Activated B cell treated with CpG ODN at 0.5 μM for 24 hours (primary cell): ENCODE measurements at regions of chr4 and their contacts with region 1.

Region 1: DNA sequence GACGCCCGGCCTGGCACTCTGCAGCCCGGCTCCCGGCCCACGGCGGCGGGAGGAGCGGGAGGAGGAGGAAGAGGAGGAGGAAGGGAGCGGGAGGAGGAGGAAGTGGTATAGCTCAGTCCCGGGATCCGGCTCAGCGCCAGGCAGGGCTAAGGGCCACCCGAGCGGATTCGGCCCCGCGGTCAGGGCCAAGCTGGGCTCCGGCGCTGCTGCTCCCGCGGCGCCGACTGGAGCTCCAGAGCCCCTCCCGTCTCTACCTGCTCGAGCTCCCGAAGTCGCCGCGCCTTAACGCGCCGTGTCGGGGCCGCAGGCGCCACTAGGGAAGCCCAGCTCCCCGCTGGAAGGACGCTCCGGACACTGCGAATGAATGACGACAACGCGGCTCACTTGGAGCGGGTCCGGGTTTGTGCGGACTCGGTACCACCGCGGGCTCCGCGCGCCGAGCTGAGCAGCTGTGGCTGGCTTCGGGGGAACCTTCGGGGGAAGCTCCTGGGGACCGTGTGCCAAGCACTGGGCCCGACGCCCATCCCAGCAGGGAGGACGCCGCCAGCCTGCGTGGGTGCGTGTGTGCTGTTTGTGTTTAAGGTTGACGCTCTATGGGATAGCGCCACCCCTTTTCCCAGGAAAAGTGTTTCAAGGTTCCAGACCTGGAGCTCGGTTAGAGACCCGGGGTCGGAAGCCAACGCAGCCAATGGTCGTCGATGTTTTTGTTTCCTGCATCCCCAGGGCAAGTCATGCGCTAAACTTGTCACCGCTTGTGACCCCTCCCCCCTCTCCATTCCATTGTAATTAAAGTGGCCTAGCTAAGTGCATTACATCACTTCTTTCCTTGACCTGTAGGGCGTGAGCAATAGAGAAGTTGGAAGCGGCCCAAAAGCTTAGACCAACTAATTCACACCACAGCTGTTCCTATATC is at the start of gene TBC1D9:
- DNase-seq: peak; percentile 70
- ATAC-seq: peak; percentile 48
- H3K4me3 Mint-ChIP-seq: peak within 1 kb of the TSS; percentile 89
- H3K27ac Mint-ChIP-seq: peak within 1 kb of the TSS; percentile 94
- H3K4me1 Mint-ChIP-seq: peaks cover 62% of the 10 kb centered on the region
- H3K27me3 Mint-ChIP-seq: no peaks in the 10 kb centered on the region
- CTCF ChIP-seq: no peak
- total RNA-seq, gene TBC1D9: 37.9 and 46.0 TPM in 2 replicates

Region 2: GRCh38 chr4:139484783-139485318 is 1271.7 kb before region 1 on chr4:
- CTCF ChIA-PET with region 1: no interaction called
- POLR2A ChIA-PET with region 1: no interaction called
- intact Hi-C with region 1: no loop called
- DNase-seq: no peak
- ATAC-seq: no peak
- H3K4me3 Mint-ChIP-seq: no peak overlapping the region
- H3K27ac Mint-ChIP-seq: no peak overlapping the region
- H3K4me1 Mint-ChIP-seq: no peaks in the 10 kb centered on the region
- H3K27me3 Mint-ChIP-seq: no peaks in the 10 kb centered on the region
- CTCF ChIP-seq: no peak

Region 3: DNA sequence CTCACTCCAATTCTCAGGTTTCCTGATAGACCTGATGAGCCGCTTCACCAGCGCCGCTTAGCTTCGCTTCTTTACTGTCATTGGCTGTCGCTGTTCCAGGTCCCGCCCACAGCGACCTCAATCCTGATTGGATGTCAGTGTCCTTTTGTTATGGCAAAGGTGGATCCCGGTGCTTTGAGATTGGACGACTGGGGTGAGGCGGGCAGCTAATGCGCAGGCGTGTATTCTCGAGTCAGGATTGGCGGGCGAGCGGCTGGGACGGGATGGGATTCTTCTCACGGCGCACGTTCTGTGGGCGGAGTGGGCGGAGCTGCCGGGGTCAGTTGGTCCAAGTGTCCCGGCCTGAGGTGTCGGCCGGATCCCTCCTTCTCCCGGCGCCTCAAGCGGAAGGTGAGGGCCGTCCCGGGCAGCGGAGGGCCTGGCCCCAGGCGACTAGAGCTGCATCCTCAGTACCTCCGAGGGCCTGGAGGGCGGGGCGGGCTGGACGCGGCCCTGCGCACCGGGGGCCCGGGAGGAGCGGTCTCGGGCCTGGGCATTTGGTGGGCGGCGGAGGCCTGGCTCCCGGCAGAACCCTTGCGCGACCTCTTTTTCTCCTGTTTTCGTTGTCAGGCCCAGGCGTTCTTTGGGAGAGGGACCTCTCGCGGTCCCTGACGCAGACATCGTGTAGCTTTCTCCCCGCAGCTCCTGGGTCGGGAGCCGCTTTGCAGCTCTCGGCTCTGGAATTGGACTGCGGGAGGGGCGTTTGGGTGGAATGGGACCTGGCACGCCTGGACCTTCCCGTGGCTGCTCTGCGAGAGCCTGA is 383.0 kb before region 1 on chr4 and contains the start of gene SCOC:
- CTCF ChIA-PET with region 1: interaction called, 3 read pairs
- POLR2A ChIA-PET with region 1: interaction called, 7 read pairs
- intact Hi-C with region 1: loop called (anchors 2 kb)
- DNase-seq: peak; percentile 85
- ATAC-seq: peak; percentile 95
- H3K4me3 Mint-ChIP-seq: no peak within 1 kb of the TSS
- H3K27ac Mint-ChIP-seq: peak within 1 kb of the TSS; percentile 74
- H3K4me1 Mint-ChIP-seq: peaks cover 22% of the 10 kb centered on the region
- H3K27me3 Mint-ChIP-seq: no peaks in the 10 kb centered on the region
- CTCF ChIP-seq: no peak
- total RNA-seq, gene SCOC: 18.0 and 19.9 TPM in 2 replicates

Region 4: GRCh38 chr4:140691357-140691756 is 65.2 kb before region 1 on chr4:
- CTCF ChIA-PET with region 1: no interaction called
- POLR2A ChIA-PET with region 1: interaction called, 17 read pairs
- intact Hi-C with region 1: no loop called
- DNase-seq: no peak
- ATAC-seq: no peak
- H3K4me3 Mint-ChIP-seq: no peak overlapping the region
- H3K27ac Mint-ChIP-seq: no peak overlapping the region
- H3K4me1 Mint-ChIP-seq: peaks cover 52% of the 10 kb centered on the region
- H3K27me3 Mint-ChIP-seq: no peaks in the 10 kb centered on the region
- CTCF ChIP-seq: no peak

Region 5: DNA sequence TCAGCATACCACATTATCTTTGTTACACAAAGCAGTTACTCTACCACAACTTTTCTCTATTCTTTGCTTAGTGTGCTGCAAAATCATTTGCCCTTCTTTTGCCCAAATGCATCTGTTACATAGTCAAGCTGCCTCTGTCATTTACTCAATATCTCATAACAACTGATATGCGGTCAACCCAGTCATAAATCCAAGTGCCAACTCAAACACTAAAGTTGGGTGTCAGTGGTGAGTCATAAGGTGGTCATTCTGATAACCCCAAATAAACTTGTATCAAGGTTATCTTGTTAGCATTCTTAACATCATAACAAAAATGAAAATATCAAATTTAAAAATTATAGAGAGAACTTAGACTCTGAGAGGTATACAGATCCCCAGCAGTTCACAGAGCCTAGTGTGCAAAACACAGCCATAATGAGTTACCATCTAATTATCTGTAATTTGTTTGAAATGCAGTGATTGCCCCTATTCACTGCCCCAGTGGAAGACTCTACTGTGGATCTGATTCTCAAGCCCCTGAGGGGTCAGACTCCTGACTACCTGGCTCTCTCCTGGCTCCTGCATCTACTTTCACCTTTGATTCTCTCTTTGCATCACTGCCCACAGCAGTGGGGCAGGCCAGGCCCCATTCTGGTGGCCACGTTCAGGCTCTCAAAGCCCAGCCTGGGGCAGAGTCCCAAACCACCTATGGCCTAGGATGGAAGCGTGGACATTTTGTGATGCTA is 29.6 kb before region 1 on chr4:
- CTCF ChIA-PET with region 1: interaction called, 7 read pairs
- POLR2A ChIA-PET with region 1: interaction called, 64 read pairs
- intact Hi-C with region 1: loop called (anchors 2 kb)
- DNase-seq: no peak
- ATAC-seq: peak; percentile 32
- H3K4me3 Mint-ChIP-seq: no peak overlapping the region
- H3K27ac Mint-ChIP-seq: peak overlapping the region; percentile 81
- H3K4me1 Mint-ChIP-seq: peaks cover 78% of the 10 kb centered on the region
- H3K27me3 Mint-ChIP-seq: no peaks in the 10 kb centered on the region
- CTCF ChIP-seq: no peak

Region 6: DNA sequence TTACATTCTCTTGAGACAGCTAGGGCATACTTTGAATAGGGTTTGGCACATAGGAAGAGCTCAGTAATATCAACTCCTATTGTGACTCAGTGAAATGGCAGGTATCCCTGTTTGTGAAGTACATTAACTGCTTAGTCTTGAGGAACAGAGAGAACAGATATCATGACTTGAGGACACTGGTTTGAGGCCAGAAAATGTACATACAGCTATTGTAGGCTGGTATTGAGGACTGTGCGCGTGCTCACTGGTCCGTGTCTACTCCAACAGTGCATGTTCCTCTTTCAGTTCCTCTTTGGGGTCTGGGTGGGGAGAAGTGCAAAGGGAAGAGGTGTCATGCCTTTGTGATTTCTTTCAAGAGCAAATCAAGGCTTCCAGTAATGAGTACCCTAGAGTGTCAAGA is 34.2 kb after region 1 on chr4:
- CTCF ChIA-PET with region 1: interaction called, 18 read pairs
- POLR2A ChIA-PET with region 1: interaction called, 92 read pairs
- intact Hi-C with region 1: loop called (anchors 1 kb)
- DNase-seq: peak; percentile 67
- ATAC-seq: peak; percentile 93
- H3K4me3 Mint-ChIP-seq: peak overlapping the region; percentile 48
- H3K27ac Mint-ChIP-seq: peak overlapping the region; percentile 71
- H3K4me1 Mint-ChIP-seq: peaks cover 76% of the 10 kb centered on the region
- H3K27me3 Mint-ChIP-seq: no peaks in the 10 kb centered on the region
- CTCF ChIP-seq: no peak

Region 7: GRCh38 chr4:140807491-140808252 is 51.1 kb after region 1 on chr4:
- CTCF ChIA-PET with region 1: interaction called, 4 read pairs
- POLR2A ChIA-PET with region 1: interaction called, 75 read pairs
- intact Hi-C with region 1: loop called (anchors 1 kb)
- DNase-seq: no peak
- ATAC-seq: peak; percentile 78
- H3K4me3 Mint-ChIP-seq: peak overlapping the region; percentile 72
- H3K27ac Mint-ChIP-seq: peak overlapping the region; percentile 93
- H3K4me1 Mint-ChIP-seq: peaks cover 89% of the 10 kb centered on the region
- H3K27me3 Mint-ChIP-seq: no peaks in the 10 kb centered on the region
- CTCF ChIP-seq: no peak

Region 8: DNA sequence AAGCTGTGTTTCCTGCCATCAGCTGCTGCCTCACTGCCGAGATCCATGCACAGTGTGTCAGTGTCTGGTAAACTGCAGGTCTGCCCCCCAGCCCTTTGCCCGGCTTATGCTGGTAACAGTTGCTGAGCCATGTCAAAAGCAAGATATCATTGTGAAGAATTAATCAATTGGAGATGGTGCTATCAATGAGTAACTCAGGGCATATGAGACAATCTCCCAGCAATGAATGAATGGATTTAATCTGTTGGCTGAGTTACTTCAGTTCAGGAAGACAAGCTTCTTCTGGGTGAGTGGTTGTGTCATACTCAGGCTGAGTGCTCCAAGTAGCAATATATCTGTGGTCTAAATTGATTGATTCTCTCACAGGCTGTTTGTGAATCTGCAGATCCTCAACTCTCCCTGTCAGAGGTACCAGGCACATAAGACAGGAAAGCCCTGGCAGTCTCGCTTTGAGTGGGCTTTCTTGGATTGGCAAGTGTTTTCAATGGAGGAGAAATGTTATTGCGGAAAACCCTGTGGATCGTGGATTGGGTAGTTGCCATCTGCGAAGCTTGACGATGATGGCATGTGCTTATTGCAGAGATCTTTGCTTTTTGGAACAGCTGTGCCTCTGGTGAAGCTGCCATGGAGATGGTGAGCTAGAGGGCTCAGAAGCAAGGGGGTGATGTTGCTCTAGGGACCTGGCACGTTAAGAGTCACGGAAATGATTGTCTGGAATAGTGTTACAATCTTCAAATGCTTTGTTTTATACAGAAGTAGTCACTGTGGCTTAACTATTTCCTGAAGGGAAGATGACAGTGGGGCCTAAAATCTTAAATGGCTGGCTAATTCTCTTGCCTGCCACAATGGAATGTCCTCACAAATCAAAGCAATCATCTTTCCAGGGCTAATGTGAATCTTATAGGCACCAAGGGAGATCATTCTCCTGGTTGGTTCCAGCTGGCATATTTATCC is 147.2 kb after region 1 on chr4:
- CTCF ChIA-PET with region 1: no interaction called
- POLR2A ChIA-PET with region 1: no interaction called
- intact Hi-C with region 1: no loop called
- DNase-seq: no peak
- ATAC-seq: no peak
- H3K4me3 Mint-ChIP-seq: no peak overlapping the region
- H3K27ac Mint-ChIP-seq: no peak overlapping the region
- H3K4me1 Mint-ChIP-seq: no peaks in the 10 kb centered on the region
- H3K27me3 Mint-ChIP-seq: peaks cover 20% of the 10 kb centered on the region
- CTCF ChIP-seq: no peak